ENCODE measurements at regions of chr4 and their contacts with region 1.

Region 1: DNA sequence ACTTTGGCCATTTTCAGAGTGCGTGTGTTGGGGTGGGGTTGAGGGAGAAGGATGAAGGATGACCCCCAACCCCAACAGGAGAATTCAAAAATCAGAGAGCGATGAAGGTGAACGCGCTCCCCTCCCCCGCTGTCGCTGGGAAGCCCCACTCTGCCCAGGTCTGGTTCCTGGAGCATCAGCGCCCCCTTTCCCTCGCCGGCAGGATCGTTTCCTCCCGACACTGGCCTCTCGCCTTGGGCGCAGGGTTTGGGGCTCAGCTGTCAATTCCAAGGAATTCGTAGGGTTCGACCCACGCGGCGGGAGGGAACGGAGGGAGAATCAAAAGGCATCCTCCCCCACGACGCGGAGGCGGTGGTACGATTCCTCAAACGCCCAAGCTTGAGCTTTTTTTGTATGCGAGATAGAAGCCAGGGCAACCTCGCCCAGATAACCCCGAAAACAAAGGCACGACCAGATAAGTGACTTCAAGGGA is 1.0 kb upstream of the PDGFRA start:
- DNase-seq: peak; percentile 46 to 51
- ATAC-seq: peak; percentile 40 to 51
- H3K4me3 ChIP-seq: peak overlapping the region; percentile 42 to 54 (median 46)
- H3K27ac ChIP-seq: peak overlapping the region; percentile 26 to 61 (median 46)
- H3K4me1 ChIP-seq: peaks cover 23 to 42% of the 10 kb centered on the region in 2 donors
- H3K27me3 ChIP-seq: peaks cover 84 to 88% (median 87%) of the 10 kb centered on the region in 3 donors
- CTCF ChIP-seq: peak; percentile 28 to 66 (median 53)
- POLR2A ChIP-seq: no peak

Region 2: DNA sequence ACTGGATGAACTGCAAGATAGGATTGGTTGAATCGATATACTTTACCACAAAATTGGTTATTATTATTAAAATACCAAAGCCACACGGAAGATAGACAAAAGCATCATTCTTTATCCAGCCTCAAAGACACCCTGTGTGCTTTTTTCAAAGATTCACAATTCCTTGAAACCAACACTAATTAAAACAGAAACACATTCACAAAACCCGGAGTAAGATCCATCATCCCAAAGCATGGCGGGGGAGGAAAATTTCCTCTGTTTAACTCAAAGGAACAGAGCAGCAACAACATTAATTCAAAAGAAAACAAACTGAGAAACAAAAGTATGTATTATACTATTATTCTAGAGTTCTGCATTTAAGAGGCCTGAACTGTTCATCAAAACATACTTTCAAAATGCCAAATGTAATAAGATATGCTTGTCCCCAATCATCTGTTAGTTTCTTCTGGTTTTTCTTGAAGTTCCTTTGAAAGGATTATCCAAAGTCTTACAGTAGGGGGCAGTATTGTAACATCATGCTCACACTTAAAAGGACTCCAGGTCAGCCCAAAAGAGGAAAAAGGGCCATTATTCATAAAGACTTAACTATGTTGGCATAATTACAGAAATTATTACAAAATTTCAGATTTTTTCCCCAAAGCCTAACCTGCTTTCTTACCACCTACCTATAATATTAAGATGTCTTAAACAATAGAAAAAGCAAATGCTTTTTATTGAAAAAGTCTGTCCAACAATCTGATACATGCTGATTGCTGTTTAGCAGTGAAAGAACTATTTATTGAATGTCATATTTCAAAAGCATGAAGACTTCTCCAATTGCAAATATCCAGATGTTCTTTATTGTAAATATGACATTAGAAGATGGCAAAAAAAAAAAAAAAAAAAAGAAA is 1031.0 kb before region 1 on chr4:
- in situ Hi-C with region 1: loop called (anchors 10 to 25 kb)
- intact Hi-C with region 1: no loop called
- DNase-seq: no peak
- ATAC-seq: peak in 1 of 2 donors; percentile 55
- H3K4me3 ChIP-seq: no peak overlapping the region
- H3K27ac ChIP-seq: no peak overlapping the region
- H3K4me1 ChIP-seq: no peaks in the 10 kb centered on the region
- H3K27me3 ChIP-seq: no peaks in the 10 kb centered on the region
- CTCF ChIP-seq: peak; percentile 44 to 71 (median 60)
- POLR2A ChIP-seq: no peak

Region 3: DNA sequence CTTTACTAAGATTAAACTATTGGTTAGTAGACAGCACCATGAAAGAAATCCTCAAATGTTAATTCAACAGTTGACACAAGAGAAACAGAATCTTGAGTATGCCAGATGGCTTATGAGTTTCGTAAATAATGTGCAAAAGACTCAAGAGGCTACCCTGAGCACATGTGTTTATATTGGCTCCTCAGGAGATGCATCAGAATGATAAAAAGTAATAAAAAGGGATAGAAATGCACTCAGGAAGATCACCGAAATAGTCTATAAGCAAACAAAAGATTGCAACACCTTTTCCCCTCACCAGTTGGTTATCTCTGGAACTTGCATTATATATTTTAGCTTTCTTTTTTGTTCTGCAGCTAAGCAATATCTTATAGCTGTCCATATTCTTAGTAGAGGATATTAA is 946.7 kb before region 1 on chr4:
- in situ Hi-C with region 1: no loop called
- intact Hi-C with region 1: no loop called
- DNase-seq: no peak
- ATAC-seq: no peak
- H3K4me3 ChIP-seq: no peak overlapping the region
- H3K27ac ChIP-seq: no peak overlapping the region
- H3K4me1 ChIP-seq: no peaks in the 10 kb centered on the region
- H3K27me3 ChIP-seq: no peaks in the 10 kb centered on the region
- CTCF ChIP-seq: no peak
- POLR2A ChIP-seq: no peak

Region 4: GRCh38 chr4:53656421-53657046 is 571.6 kb before region 1 on chr4:
- in situ Hi-C with region 1: no loop called
- intact Hi-C with region 1: loop called (anchors 2 kb)
- DNase-seq: peak in 1 of 2 donors; percentile 24
- ATAC-seq: peak; percentile 64 to 73
- H3K4me3 ChIP-seq: no peak overlapping the region
- H3K27ac ChIP-seq: peak overlapping the region; percentile 30 to 54 (median 48)
- H3K4me1 ChIP-seq: peaks cover 0 to 18% of the 10 kb centered on the region in 2 donors
- H3K27me3 ChIP-seq: no peaks in the 10 kb centered on the region
- CTCF ChIP-seq: peak in 1 of 5 experiments; percentile 28
- POLR2A ChIP-seq: no peak

Region 5: GRCh38 chr4:53908661-53909078 is 319.4 kb before region 1 on chr4:
- in situ Hi-C with region 1: loop called in 1 of 4 experiments (anchors 5 kb)
- intact Hi-C with region 1: no loop called
- DNase-seq: peak; percentile 10 to 25
- ATAC-seq: peak; percentile 86 to 96
- H3K4me3 ChIP-seq: peak overlapping the region in 1 of 4 donors; percentile 22
- H3K27ac ChIP-seq: peak overlapping the region in 1 of 4 donors; percentile 14
- H3K4me1 ChIP-seq: peaks cover 16% of the 10 kb centered on the region in 2 donors
- H3K27me3 ChIP-seq: no peaks in the 10 kb centered on the region
- CTCF ChIP-seq: peak; percentile 20 to 64 (median 53)
- POLR2A ChIP-seq: no peak

Region 6: DNA sequence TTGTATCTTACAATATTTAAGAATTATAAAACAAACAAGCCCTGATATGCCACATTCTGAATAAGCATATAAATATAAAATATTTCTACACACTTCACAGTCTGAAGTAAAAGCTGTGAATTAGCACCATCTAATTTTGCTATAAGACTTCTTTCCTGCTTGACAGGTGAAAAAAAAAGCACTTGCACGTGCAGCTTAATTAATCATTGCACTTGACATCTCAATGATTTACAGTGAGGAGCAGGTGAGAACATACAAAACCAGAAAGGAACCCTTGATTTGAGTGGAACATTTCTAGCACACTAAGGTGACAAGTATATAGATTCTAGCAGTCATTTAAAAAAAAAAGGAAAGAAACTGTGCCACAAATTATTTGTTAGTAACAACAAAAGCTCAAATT is 211.6 kb before region 1 on chr4:
- in situ Hi-C with region 1: no loop called
- intact Hi-C with region 1: no loop called
- DNase-seq: no peak
- ATAC-seq: no peak
- H3K4me3 ChIP-seq: no peak overlapping the region
- H3K27ac ChIP-seq: no peak overlapping the region
- H3K4me1 ChIP-seq: peaks cover 12 to 14% of the 10 kb centered on the region in 2 donors
- H3K27me3 ChIP-seq: no peaks in the 10 kb centered on the region
- CTCF ChIP-seq: no peak
- POLR2A ChIP-seq: no peak

Region 7: DNA sequence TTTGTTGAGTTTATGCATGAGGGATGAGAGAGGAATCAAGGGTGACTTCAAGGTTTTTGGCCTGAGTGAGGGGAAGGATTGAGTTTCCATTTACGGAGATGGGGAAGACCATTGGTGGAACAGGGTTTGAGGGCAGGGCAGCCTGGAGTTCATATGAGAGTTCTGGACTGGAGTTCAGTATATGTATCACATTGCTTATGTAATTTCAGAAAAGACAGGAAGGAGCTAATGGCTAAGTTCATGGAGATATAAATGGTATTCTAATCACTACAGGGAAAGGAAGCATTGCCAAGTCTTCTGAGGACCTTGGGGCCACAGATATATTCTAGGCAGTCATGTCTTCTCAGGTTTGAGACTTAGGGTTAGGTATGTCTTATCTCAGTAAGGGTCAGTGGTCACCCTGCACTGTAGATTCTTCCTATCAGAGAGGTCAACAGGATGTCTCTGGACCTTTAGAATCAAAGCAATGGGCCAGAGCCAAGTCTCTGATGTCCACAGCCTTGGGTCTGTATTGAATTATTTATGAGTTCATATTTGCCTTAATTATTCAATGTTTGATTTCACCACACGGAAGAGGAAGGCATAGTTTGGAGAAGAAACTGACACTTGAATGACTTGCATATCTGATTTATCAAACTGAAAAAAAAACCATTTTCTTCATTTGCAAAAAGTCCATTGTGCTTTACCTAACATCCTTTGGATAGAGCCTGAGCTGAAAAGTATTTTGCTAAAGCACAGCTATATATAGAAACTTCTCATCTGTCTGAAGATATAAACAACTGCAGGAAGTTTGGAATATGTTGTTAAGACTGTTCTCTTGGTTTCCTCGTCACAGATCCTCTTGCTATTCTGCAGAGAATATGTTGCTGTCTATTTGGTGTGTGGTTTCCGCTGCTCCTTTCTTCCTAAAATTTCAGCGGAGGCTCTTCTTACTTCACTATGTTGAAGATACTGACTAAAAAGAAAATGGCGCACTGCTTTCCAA is 140.5 kb after region 1 on chr4:
- in situ Hi-C with region 1: no loop called
- intact Hi-C with region 1: no loop called
- DNase-seq: no peak
- ATAC-seq: peak in 1 of 2 donors; percentile 74
- H3K4me3 ChIP-seq: no peak overlapping the region
- H3K27ac ChIP-seq: peak overlapping the region in 2 of 4 donors; percentile 7 to 35
- H3K4me1 ChIP-seq: peaks cover 15 to 20% of the 10 kb centered on the region in 2 donors
- H3K27me3 ChIP-seq: no peaks in the 10 kb centered on the region
- CTCF ChIP-seq: no peak
- POLR2A ChIP-seq: no peak

Measured in gastrocnemius medialis (tissue), 4 donors.